G401 (cell line): ENCODE measurements at regions of chr10 and their contacts with region 1.

Region 1: DNA sequence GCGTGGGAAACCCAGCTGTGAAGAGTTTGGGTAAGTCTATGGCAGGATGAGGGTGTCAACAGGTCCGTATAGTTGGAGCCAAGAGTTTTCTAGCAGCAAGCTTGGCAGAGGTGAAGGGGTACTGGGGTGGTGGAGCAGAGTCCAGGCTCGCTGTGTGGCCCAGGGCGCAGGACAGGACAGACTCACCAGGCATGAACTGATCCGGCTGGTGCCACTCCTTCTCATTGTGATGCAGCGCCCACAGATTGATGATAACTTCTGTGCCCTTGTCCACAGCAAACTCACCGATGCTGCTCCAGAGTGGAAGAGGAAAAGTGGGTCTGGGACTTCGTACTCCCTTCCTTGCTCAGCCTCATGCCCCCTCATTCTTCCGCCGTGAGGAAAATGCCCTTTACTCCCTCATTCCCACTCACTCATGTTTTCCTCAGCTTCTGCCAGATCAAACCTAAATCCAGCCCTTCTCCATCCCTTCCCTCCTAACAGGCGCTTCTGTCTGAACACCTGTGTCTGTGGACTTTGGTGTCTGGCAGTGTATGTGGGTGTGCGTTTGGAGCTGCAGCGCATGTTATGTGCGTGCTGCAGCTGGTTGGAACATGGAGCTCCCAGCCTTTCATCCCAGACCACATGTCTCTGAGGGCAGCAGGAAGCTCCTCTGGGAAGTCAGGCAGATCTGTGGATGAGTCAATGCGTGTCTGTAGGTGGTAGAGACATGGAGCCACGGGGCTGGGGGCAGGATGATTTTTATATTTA is 5.7 kb downstream of the CYP17A1 start:
- DNase-seq: no peak

Region 2: GRCh38 chr10:102743588-102744373 is 87.7 kb before region 1 on chr10 and contains the start of gene WBP1L:
- in situ Hi-C with region 1: loop called (anchors 5 kb)
- DNase-seq: peak; percentile 100
- total RNA-seq, gene WBP1L: 13.6 and 16.6 TPM in 2 replicates